Activated CD8-positive, alpha-beta T cell treated with anti-CD3 and anti-CD28 coated beads, Interleukin-2, amount 10 ng/mL, durations not matched to agents 7 days and 5 days (primary cell): ENCODE measurements at regions of chr17 and their contacts with region 1.

Region 1: GRCh38 chr17:76208120-76208519 is 32.2 kb downstream of the RNF157 start:
- DNase-seq: peak; percentile 50
- ATAC-seq: peak; percentile 67
- H3K4me3 Mint-ChIP-seq: peak overlapping the region; percentile 15
- H3K27ac Mint-ChIP-seq: peak overlapping the region; percentile 74
- H3K4me1 Mint-ChIP-seq: peaks cover 75% of the 10 kb centered on the region
- H3K27me3 Mint-ChIP-seq: no peaks in the 10 kb centered on the region

Region 2: GRCh38 chr17:76246080-76247066 is 38.3 kb after region 1 on chr17:
- CTCF ChIA-PET with region 1: interaction called, 3 read pairs
- POLR2A ChIA-PET with region 1: interaction called, 14 read pairs
- DNase-seq: peak; percentile 91
- ATAC-seq: peak; percentile 97
- H3K4me3 Mint-ChIP-seq: peak overlapping the region; percentile 62
- H3K27ac Mint-ChIP-seq: peak overlapping the region; percentile 91
- H3K4me1 Mint-ChIP-seq: peaks cover 84% of the 10 kb centered on the region
- H3K27me3 Mint-ChIP-seq: no peaks in the 10 kb centered on the region

Region 3: DNA sequence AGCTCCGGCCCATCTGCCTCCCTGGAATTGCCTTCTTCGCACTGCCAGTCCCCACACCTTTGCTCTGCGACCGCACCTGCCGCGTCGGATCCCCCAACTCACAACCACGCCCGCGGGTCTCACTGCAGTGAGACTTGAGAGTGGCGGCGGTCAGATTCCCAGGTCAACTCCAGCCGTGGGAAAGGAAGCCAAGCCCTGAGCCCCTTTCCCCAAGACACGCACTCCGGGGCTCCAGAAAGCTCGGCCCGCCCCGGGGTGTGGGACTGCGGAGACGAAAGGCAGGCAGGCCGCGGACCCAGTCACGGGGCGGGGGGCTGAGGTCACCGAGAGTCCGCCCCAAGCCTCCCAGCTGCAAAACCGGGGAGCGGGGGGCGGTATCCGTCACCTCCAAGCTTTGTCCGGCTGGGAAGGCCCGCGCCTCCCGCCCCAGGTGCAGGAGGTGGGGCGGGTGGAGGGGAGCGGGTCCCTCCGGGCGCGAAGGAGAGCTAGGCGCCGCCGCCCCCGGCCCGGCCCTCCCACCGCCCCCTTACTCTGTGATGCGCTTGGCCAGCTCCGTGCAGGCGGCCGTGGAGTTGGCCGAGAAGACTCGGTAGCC is 145.0 kb after region 1 on chr17:
- CTCF ChIA-PET with region 1: no interaction called
- POLR2A ChIA-PET with region 1: no interaction called
- DNase-seq: peak; percentile 31
- ATAC-seq: peak; percentile 12
- H3K4me3 Mint-ChIP-seq: peak overlapping the region; percentile 98
- H3K27ac Mint-ChIP-seq: peak overlapping the region; percentile 100
- H3K4me1 Mint-ChIP-seq: peaks cover 28% of the 10 kb centered on the region
- H3K27me3 Mint-ChIP-seq: no peaks in the 10 kb centered on the region